Naive thymus-derived CD4-positive, alpha-beta T cell (primary cell): ENCODE measurements at regions of chr20 and their contacts with region 1.

Region 1: DNA sequence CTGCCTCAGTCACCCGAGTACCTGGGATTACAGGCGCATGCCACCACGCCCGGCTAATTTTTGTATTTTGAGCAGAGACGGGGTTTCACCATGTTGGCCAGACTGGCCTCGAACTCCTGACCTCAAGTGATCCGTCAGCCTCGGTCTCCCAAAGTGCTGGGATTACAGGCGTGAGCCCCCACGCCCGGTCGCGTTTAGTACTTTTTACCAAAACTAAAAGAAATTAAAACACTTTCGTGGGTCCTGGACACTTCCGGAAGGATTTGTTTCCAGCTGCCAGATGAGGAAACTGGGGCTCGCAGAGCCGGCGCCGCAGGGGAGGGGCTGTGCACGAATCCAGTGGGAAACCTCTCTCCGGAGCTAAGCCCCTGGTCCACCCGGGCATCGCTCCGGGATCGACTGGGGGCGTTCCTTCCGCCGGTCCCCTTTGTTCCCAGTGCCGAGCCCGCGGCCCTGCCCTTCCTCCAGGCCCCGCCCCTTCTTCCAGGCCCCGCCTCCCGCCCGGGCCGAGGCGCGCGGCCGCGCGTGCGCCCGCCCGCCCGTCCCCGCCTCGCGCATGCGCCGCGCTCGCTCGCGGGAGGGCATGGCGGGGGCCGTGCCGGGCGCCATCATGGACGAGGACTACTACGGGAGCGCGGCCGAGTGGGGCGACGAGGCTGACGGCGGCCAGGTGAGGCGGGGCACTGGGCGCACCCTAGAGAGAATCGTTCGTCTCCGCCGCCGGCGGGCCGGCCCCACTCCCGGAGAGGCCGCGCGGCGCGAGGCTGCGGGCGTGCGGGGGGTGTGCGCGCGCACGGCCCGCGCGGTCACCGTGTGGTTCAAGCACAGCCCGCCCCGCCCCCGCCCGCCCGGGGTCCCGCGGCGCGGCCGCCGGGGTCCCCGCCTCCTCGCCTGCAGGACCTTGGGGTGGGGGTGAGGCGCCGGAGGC is at the start of gene NELFCD:
- DNase-seq: peak; percentile 78 to 96 (median 88)
- ATAC-seq: peak; percentile 97
- H3K4me3 ChIP-seq: peak within 1 kb of the TSS; percentile 91
- H3K4me3 Mint-ChIP-seq: peak within 1 kb of the TSS; percentile 86 to 97 (median 94)
- H3K27ac ChIP-seq: peak within 1 kb of the TSS; percentile 88
- H3K27ac Mint-ChIP-seq: peak within 1 kb of the TSS; percentile 77 to 98 (median 90)
- H3K4me1 ChIP-seq: peaks cover 24% of the 10 kb centered on the region in 2 donors
- H3K4me1 Mint-ChIP-seq: peaks cover 26 to 41% (median 32%) of the 10 kb centered on the region in 7 donors
- H3K27me3 ChIP-seq: no peaks in the 10 kb centered on the region
- H3K27me3 Mint-ChIP-seq: peaks cover 0 to 9% (median 0%) of the 10 kb centered on the region in 5 donors
- total RNA-seq, gene NELFCD: 84.5 to 96.1 (median 90.8) TPM

Region 2: DNA sequence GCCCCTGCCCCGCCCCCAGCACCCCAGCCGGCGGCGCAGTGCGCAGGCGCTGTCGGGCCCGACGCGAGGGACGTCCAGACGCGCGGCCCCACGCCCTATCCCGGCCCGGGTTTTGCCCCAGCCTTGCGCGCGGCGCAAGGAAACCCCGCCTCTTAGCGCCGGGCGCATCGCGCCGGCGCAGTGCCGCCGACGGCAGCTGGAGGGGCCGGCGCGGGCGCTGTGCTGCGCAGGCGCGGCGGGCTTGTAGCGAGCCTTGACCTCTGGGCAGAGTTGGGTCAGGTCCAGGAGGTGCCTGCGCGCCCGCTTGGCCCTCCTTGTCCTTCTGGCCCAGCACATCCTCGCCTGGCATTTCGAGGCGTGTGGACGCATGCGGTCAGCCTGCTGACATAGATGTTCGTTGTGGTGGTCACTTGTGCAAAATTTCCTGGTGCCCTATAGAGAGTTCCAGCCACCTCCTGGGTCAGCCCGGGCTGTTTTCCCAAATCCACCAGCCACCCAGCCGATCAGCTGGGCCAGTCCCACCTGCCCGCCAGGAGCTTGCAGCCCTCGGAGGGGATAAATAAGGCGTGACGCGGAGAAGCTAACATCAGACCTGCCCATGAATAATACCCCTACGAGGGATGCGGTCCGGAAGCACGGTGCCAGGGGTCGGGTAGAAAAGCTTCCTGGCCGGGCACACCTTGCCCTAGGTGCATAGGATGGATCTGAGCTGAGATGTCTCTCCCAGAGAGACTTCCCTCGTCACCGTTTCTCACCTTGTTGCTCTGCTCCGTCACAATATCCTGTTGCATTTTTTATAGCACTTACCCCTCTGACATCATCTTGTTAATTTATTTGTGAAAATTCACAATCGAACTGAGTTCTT is 62.1 kb after region 1 on chr20:
- CTCF ChIA-PET with region 1: no interaction called
- POLR2A ChIA-PET with region 1: no interaction called
- intact Hi-C with region 1: loop called (anchors 1 kb)
- DNase-seq: peak; percentile 90 to 98 (median 94)
- ATAC-seq: peak; percentile 98
- H3K4me3 ChIP-seq: peak overlapping the region; percentile 76
- H3K4me3 Mint-ChIP-seq: peak overlapping the region; percentile 81 to 96 (median 90)
- H3K27ac ChIP-seq: peak overlapping the region; percentile 93
- H3K27ac Mint-ChIP-seq: peak overlapping the region; percentile 76 to 96 (median 91)
- H3K4me1 ChIP-seq: peaks cover 30 to 32% of the 10 kb centered on the region in 2 donors
- H3K4me1 Mint-ChIP-seq: peaks cover 35 to 54% (median 50%) of the 10 kb centered on the region in 7 donors
- H3K27me3 ChIP-seq: no peaks in the 10 kb centered on the region
- H3K27me3 Mint-ChIP-seq: no peaks in the 10 kb centered on the region

Region 3: GRCh38 chr20:59117523-59117922 is 136.6 kb after region 1 on chr20:
- CTCF ChIA-PET with region 1: no interaction called
- POLR2A ChIA-PET with region 1: no interaction called
- intact Hi-C with region 1: no loop called
- DNase-seq: peak in 1 of 9 donors; percentile 21
- ATAC-seq: no peak
- H3K4me3 ChIP-seq: no peak overlapping the region
- H3K4me3 Mint-ChIP-seq: peak overlapping the region in 9 of 10 donors; percentile 14 to 73 (median 51)
- H3K27ac ChIP-seq: no peak overlapping the region
- H3K27ac Mint-ChIP-seq: peak overlapping the region; percentile 29 to 100 (median 81)
- H3K4me1 ChIP-seq: peaks cover 44 to 60% of the 10 kb centered on the region in 2 donors
- H3K4me1 Mint-ChIP-seq: peaks cover 39 to 69% (median 63%) of the 10 kb centered on the region in 7 donors
- H3K27me3 ChIP-seq: no peaks in the 10 kb centered on the region
- H3K27me3 Mint-ChIP-seq: peaks cover 0 to 16% (median 0%) of the 10 kb centered on the region in 5 donors